Transverse colon (tissue), 4 donors: ENCODE measurements at regions of chr18 and their contacts with region 1.

Region 1: GRCh38 chr18:1383464-1383863 is 478.8 kb downstream of the ADCYAP1 start:
- DNase-seq: no peak
- H3K4me3 ChIP-seq: no peak overlapping the region
- H3K27ac ChIP-seq: no peak overlapping the region
- H3K4me1 ChIP-seq: no peaks in the 10 kb centered on the region
- H3K27me3 ChIP-seq: no peaks in the 10 kb centered on the region
- CTCF ChIP-seq: no peak
- EP300 ChIP-seq: no peak
- POLR2A ChIP-seq: no peak

Region 2: DNA sequence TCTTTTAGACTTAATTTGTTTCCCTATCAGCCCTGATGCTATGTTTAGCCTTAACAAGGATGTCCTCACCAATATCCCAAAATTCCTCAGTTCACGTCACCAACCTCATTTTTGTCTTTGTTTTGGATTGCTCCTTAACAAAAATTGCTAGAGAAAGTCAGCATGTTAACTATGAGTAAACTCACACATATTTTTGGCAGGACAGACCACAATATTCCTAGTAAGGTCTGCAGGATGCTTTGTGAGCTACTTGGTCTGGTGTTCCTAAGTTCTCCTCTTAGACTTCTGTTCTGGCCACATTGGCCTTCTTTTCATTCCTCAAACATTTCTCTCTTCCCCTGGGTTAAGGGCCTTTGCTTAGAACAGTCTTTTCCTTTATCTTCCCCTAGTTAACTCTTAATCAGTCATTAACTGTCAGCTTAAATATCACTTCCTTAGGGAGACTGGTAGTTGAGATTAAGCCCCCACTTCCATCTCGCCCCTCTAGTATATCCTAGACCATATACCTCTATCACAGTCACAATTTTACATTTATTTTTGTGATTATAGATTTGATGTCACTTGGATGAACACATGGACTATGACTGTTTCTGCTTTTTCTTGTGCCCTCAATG is 362.6 kb before region 1 on chr18:
- in situ Hi-C with region 1: no loop called
- intact Hi-C with region 1: no loop called
- DNase-seq: no peak
- H3K4me3 ChIP-seq: no peak overlapping the region
- H3K27ac ChIP-seq: no peak overlapping the region
- H3K4me1 ChIP-seq: no peaks in the 10 kb centered on the region
- H3K27me3 ChIP-seq: no peaks in the 10 kb centered on the region
- CTCF ChIP-seq: no peak
- EP300 ChIP-seq: no peak
- POLR2A ChIP-seq: no peak

Region 3: GRCh38 chr18:1499265-1499664 is 115.8 kb after region 1 on chr18:
- in situ Hi-C with region 1: loop called in 1 of 4 experiments (anchors 25 kb)
- intact Hi-C with region 1: no loop called
- DNase-seq: no peak
- H3K4me3 ChIP-seq: no peak overlapping the region
- H3K27ac ChIP-seq: no peak overlapping the region
- H3K4me1 ChIP-seq: no peaks in the 10 kb centered on the region
- H3K27me3 ChIP-seq: no peaks in the 10 kb centered on the region
- CTCF ChIP-seq: no peak
- EP300 ChIP-seq: no peak
- POLR2A ChIP-seq: no peak

Region 4: GRCh38 chr18:1691863-1692262 is 308.4 kb after region 1 on chr18:
- in situ Hi-C with region 1: no loop called
- intact Hi-C with region 1: no loop called
- DNase-seq: no peak
- H3K4me3 ChIP-seq: no peak overlapping the region
- H3K27ac ChIP-seq: no peak overlapping the region
- H3K4me1 ChIP-seq: no peaks in the 10 kb centered on the region
- H3K27me3 ChIP-seq: no peaks in the 10 kb centered on the region
- CTCF ChIP-seq: no peak
- EP300 ChIP-seq: no peak
- POLR2A ChIP-seq: no peak

Region 5: GRCh38 chr18:2223849-2224248 is 840.4 kb after region 1 on chr18:
- in situ Hi-C with region 1: no loop called
- intact Hi-C with region 1: no loop called
- DNase-seq: no peak
- H3K4me3 ChIP-seq: no peak overlapping the region
- H3K27ac ChIP-seq: no peak overlapping the region
- H3K4me1 ChIP-seq: peaks cover 0 to 14% (median 5%) of the 10 kb centered on the region in 4 donors
- H3K27me3 ChIP-seq: no peaks in the 10 kb centered on the region
- CTCF ChIP-seq: peak; percentile 28 to 44 (median 36)
- EP300 ChIP-seq: no peak
- POLR2A ChIP-seq: no peak